Activated CD4-positive, alpha-beta T cell treated with anti-CD3 and anti-CD28 coated beads, Interleukin-2, amount 10 ng/mL, durations not matched to agents 24 days and 14 days (primary cell): ENCODE measurements at regions of chr1 and their contacts with region 1.

Region 1: GRCh38 chr1:184866991-184867788 is 107.1 kb downstream of the NIBAN1 start:
- DNase-seq: peak; percentile 83
- H3K4me3 Mint-ChIP-seq: peak overlapping the region; percentile 47
- H3K27ac Mint-ChIP-seq: peak overlapping the region; percentile 89
- H3K4me1 Mint-ChIP-seq: peaks cover 40% of the 10 kb centered on the region
- H3K27me3 Mint-ChIP-seq: no peaks in the 10 kb centered on the region

Region 2: DNA sequence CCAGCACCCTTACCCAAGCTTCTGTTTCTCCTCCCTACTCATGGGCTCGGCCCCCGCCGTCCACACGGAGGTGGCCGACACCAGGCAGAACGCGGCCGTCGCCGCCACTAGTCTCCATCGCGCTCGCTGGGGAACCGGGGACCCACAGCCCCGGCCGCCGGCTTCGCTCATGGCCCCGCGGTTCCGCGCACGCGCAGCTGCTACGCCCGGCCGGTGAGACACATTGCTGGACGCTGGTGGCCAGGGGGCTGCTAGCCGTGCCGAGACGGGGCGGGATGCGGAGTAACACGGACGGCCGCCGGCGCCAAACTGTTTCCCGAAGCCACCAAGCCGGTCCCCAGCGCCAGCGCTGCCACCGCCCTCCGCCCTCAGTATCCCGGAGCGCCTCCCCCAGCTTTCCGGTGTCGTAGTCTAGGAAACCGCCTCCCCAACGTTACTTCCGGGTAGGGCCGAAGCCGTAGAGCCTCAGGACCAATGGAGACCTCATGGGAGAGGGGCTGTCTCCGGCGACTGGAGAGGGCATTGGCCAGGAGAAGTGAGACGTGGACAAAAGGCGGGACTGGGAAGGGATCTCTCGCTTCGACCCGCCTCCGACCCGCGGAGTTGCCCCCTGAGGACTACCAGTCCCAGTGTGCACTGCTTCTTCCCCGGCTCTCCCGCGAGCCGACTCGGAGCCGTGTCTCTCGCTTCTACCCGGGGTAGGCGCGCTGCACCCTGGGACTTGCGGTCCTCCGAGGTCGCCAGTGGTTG is 112.5 kb before region 1 on chr1 and contains the start of gene EDEM3:
- intact Hi-C with region 1: loop called (anchors 5 kb)
- DNase-seq: peak; percentile 99
- H3K4me3 Mint-ChIP-seq: peak within 1 kb of the TSS; percentile 98
- H3K27ac Mint-ChIP-seq: peak within 1 kb of the TSS; percentile 96
- H3K4me1 Mint-ChIP-seq: peaks cover 23% of the 10 kb centered on the region
- H3K27me3 Mint-ChIP-seq: peaks cover 7% of the 10 kb centered on the region
- total RNA-seq, gene EDEM3: 23.6 and 28.3 TPM in 2 replicates

Region 3: DNA sequence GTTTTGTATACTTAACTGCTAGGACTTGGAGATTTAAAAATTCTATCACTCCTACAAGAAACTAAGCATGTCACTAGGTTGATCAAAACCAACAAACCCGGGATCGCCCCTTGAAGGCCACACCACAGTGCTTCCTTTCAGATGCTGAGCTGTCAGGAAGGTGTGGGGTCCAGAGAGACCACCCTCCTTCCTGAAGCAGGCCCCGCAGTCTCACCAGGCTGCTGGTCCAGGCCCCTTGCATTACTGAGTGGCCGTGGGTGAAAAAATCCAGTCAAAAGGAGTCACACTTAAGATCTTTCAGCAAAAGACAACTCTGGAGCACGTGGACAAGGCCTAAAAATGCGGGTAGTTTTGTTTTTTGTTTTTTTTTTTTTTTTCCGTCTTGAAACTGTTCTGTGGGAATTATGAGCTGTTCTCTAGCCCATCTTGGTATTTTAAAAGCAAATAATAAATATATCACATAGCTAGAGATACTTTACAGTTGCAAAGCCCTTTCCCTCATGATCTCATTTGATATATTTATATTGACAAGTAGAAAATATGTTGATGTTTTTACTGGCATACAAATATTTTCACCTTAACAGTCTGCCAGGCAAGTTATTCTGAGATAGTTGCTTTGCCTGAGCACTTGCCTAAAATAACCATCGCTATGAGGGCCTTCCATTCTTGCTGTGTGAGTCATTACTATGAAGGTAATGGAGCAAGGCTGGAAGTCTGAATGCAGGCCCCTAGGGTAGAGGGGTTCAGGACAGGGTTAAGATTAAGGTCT is 39.4 kb before region 1 on chr1:
- intact Hi-C with region 1: loop called (anchors 5 kb)
- DNase-seq: no peak
- H3K4me3 Mint-ChIP-seq: no peak overlapping the region
- H3K27ac Mint-ChIP-seq: no peak overlapping the region
- H3K4me1 Mint-ChIP-seq: peaks cover 3% of the 10 kb centered on the region
- H3K27me3 Mint-ChIP-seq: no peaks in the 10 kb centered on the region

Region 4: GRCh38 chr1:184892116-184892515 is 24.9 kb after region 1 on chr1:
- intact Hi-C with region 1: loop called (anchors 1 kb)
- DNase-seq: peak; percentile 58
- H3K4me3 Mint-ChIP-seq: no peak overlapping the region
- H3K27ac Mint-ChIP-seq: peak overlapping the region; percentile 61
- H3K4me1 Mint-ChIP-seq: peaks cover 29% of the 10 kb centered on the region
- H3K27me3 Mint-ChIP-seq: no peaks in the 10 kb centered on the region

Region 5: DNA sequence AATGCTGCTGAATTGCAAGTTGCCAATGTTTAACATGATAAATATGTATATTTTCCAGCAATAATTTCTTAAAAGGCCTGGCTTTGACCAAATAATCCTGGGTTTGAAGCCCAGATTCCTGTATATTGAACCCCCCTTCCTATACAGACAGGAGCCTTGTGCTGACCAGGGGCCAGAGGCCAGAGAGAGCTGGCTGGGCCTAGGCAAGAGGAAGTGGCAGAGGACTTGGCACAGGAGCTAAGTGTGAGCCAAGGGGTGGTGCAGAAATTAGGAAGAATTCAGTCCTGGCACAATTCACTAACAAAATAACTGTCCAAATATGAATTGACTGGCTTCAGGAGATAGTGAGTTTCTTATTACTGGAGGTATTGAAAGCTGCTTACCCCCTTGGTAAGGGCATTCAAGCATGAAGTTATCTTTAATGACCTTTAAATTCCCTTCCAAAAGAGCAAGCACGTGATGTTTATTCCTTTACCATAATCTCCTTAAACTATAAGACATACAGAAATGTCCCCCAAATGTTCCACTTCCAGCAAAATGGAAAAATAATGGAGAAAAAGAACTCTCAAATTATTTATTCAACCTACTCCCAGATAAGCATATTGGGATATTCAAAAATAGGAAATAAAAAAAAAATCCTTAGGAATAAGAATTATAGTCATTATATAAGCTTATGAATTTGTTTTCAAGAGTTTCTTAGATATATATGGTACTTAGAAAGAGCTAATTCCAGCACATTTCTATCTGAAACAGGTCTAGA is 80.5 kb after region 1 on chr1:
- intact Hi-C with region 1: no loop called
- DNase-seq: no peak
- H3K4me3 Mint-ChIP-seq: no peak overlapping the region
- H3K27ac Mint-ChIP-seq: no peak overlapping the region
- H3K4me1 Mint-ChIP-seq: peaks cover 12% of the 10 kb centered on the region
- H3K27me3 Mint-ChIP-seq: no peaks in the 10 kb centered on the region

Region 6: GRCh38 chr1:184973272-184974055 is 106.3 kb after region 1 on chr1:
- intact Hi-C with region 1: loop called (anchors 1 kb)
- DNase-seq: no peak
- H3K4me3 Mint-ChIP-seq: peak overlapping the region; percentile 91
- H3K27ac Mint-ChIP-seq: peak overlapping the region; percentile 94
- H3K4me1 Mint-ChIP-seq: peaks cover 56% of the 10 kb centered on the region
- H3K27me3 Mint-ChIP-seq: peaks cover 19% of the 10 kb centered on the region

Region 7: DNA sequence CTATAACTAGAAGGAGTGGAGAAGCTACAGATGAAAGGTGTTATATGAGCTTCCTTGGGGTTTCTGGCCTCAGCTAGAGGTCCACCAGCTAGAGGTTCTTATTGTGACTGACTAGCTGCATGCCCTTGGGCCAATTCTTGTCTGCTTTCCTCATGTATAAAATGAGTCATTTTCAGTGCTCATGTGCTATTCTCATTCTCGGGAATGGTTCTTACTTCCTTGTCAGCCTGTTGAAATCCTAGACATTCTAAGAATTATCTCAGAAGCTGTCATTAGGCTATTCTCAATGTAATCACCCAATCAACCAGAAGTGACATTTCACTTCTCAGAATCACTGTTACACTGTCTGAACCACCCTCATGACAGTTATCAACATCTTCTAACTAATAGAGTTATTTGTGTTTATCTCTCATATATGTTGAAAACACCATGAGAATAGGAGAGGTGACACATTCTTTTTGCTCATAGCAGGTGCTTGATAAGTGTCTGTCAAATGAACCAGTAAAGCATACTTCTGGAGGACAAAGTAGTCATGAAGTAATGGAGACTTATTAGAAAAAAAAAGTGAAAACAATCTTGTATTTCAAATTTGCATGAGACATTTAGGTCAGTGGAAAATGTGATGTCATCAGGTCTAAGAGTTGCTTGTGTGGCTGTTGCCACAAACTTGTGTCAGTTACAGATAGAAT is 572.7 kb after region 1 on chr1:
- intact Hi-C with region 1: loop called (anchors 2 kb)
- DNase-seq: peak; percentile 86
- H3K4me3 Mint-ChIP-seq: no peak overlapping the region
- H3K27ac Mint-ChIP-seq: no peak overlapping the region
- H3K4me1 Mint-ChIP-seq: peaks cover 28% of the 10 kb centered on the region
- H3K27me3 Mint-ChIP-seq: no peaks in the 10 kb centered on the region